ENCODE measurements at regions of chr6 and their contacts with region 1.

Region 1: GRCh38 chr6:32622545-32623401 is 14.4 kb upstream of the HLA-DQA1 start:
- DNase-seq: peak in 8 of 9 donors; percentile 26 to 90 (median 74)
- ATAC-seq: peak; percentile 87
- H3K4me3 ChIP-seq: peak overlapping the region; percentile 5
- H3K4me3 Mint-ChIP-seq: peak overlapping the region in 9 of 10 donors; percentile 14 to 86 (median 72)
- H3K27ac ChIP-seq: peak overlapping the region; percentile 67
- H3K27ac Mint-ChIP-seq: peak overlapping the region; percentile 62 to 97 (median 88)
- H3K4me1 ChIP-seq: peaks cover 29 to 31% of the 10 kb centered on the region in 2 donors
- H3K4me1 Mint-ChIP-seq: peaks cover 22 to 60% (median 46%) of the 10 kb centered on the region in 7 donors
- H3K27me3 ChIP-seq: no peaks in the 10 kb centered on the region
- H3K27me3 Mint-ChIP-seq: no peaks in the 10 kb centered on the region

Region 2: GRCh38 chr6:32413427-32414047 is 209.2 kb before region 1 on chr6:
- CTCF ChIA-PET with region 1: no interaction called
- POLR2A ChIA-PET with region 1: no interaction called
- intact Hi-C with region 1: loop called in 1 of 2 experiments (anchors 2 kb)
- DNase-seq: peak; percentile 54 to 85 (median 79)
- ATAC-seq: peak; percentile 96
- H3K4me3 ChIP-seq: no peak overlapping the region
- H3K4me3 Mint-ChIP-seq: no peak overlapping the region
- H3K27ac ChIP-seq: no peak overlapping the region
- H3K27ac Mint-ChIP-seq: no peak overlapping the region
- H3K4me1 ChIP-seq: no peaks in the 10 kb centered on the region
- H3K4me1 Mint-ChIP-seq: peaks cover 3 to 14% (median 8%) of the 10 kb centered on the region in 7 donors
- H3K27me3 ChIP-seq: peaks cover 0 to 3% of the 10 kb centered on the region in 2 donors
- H3K27me3 Mint-ChIP-seq: peaks cover 30 to 62% (median 45%) of the 10 kb centered on the region in 5 donors

Region 3: DNA sequence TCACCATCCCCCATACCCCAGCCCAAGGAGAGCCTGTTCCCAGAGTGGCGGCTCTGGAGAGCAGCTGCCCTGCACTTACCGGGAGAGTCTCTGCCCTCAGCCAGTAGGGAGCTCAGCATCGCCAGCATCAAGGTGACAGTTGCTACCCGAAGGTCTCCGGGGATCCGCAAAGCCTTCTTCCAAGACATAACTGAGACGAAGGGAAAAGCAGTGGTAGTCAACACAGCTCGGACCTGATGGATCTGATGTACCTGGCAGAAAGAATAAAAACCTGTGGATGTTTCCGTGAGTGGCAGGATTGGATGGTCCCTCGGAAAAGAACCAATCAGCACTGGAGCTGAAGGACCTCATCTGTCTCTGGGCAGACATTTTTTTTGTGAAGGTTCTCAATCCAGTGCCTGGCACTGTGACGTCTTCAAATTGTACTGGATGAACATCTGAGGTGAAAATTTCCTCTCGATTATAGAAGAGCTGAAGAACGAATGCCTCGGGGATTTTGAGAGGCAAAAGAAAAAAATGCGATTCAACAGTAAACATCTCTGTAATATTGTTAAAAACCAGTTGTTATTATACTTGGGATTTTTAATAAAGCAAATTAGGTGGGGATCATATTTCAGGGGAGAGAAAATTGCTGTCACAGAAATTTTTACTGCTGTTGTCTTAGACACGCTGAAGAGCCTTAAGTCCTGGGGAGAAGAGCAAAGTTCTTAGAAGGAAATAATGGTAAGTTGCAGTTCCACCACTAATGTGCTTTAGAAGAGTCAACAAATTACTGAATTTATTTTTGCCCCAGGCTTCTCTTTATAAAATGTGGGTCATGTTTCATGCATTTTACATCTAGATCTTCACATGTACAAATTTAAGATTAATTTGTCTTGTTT is 43.9 kb after region 1 on chr6 and contains the start of gene HLA-DQB1:
- CTCF ChIA-PET with region 1: no interaction called
- POLR2A ChIA-PET with region 1: no interaction called
- intact Hi-C with region 1: loop called (anchors 1 to 2 kb)
- DNase-seq: peak in 5 of 9 donors; percentile 49 to 67 (median 61)
- ATAC-seq: peak; percentile 90
- H3K4me3 ChIP-seq: peak within 1 kb of the TSS; percentile 63
- H3K4me3 Mint-ChIP-seq: peak within 1 kb of the TSS; percentile 45 to 88 (median 75)
- H3K27ac ChIP-seq: peak within 1 kb of the TSS; percentile 45
- H3K27ac Mint-ChIP-seq: peak within 1 kb of the TSS in 6 of 9 donors; percentile 47 to 86 (median 68)
- H3K4me1 ChIP-seq: peaks cover 11% of the 10 kb centered on the region in 2 donors
- H3K4me1 Mint-ChIP-seq: peaks cover 21 to 48% (median 40%) of the 10 kb centered on the region in 7 donors
- H3K27me3 ChIP-seq: no peaks in the 10 kb centered on the region
- H3K27me3 Mint-ChIP-seq: peaks cover 12 to 62% (median 24%) of the 10 kb centered on the region in 5 donors
- total RNA-seq, gene HLA-DQB1: 5.3 to 38.9 (median 9.4) TPM

Region 4: DNA sequence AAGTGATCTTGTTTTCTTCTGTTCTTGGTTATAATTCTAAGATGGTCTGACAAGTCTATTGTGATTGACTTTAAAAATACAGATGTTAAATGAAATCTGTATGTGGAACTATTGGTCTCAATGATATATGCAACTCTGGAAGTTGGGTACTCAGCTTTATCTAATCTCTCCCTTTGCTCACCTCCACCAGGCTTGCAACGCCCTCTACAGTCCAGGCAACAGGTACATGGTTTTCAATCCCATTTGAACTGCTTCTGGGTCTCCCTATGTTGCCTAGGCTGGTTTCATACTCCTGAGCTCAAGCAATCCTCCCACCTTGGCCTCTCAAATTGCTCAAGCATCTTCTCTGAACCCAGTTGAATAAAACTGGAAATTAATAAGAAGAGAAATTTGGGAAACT is 69.2 kb after region 1 on chr6:
- CTCF ChIA-PET with region 1: interaction called, 6 read pairs
- POLR2A ChIA-PET with region 1: no interaction called
- intact Hi-C with region 1: loop called in 1 of 2 experiments (anchors 2 kb)
- DNase-seq: peak in 8 of 9 donors; percentile 13 to 62 (median 46)
- ATAC-seq: peak; percentile 76
- H3K4me3 ChIP-seq: no peak overlapping the region
- H3K4me3 Mint-ChIP-seq: no peak overlapping the region
- H3K27ac ChIP-seq: no peak overlapping the region
- H3K27ac Mint-ChIP-seq: no peak overlapping the region
- H3K4me1 ChIP-seq: peaks cover 0 to 1% of the 10 kb centered on the region in 2 donors
- H3K4me1 Mint-ChIP-seq: peaks cover 4 to 16% (median 7%) of the 10 kb centered on the region in 7 donors
- H3K27me3 ChIP-seq: no peaks in the 10 kb centered on the region
- H3K27me3 Mint-ChIP-seq: peaks cover 3 to 58% (median 23%) of the 10 kb centered on the region in 5 donors

Region 5: DNA sequence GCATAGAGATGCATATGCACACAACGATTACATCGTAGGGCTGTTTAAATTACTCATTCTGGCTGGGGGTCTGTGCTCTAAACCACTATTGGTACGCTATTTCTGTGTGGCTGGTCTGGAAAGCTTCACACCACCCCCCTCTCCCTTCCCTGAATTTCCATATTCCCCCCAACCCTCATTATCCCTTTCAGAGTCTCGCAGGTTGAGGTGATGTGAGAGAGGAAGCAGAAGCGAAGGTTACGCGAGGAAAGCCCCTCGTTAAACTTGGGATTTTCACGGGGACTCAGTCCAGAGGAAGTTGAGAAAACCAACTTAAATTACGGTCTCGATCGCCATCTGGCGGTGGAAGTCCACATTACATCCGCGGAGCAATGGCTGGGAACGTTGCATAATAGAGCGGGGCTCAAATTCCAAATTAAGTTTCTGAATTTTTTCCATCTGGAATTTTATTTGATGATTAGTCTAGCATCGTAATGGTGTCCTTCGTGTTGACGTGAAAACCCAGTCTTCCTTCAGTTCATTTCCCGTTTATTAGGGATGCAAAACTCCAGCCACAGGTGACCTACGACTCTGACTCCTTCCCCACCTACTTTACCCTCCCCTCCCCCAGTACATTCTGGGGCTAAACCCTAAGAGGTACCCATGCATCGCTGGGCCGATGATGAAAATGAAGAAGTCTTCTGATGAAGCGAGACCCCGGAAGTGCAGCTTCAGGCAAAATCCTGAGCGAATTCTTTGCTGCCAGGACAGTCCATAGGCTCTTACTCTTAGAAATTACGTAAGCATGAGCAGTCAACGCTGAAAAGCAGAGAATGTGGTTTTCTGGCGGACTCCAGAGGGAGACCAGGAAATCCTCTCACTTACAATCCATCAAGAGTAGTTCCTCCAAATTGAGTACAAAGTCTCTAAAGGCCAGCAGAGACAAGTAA is 174.3 kb after region 1 on chr6:
- CTCF ChIA-PET with region 1: interaction called, 5 read pairs
- POLR2A ChIA-PET with region 1: no interaction called
- intact Hi-C with region 1: loop called in 1 of 2 experiments (anchors 2 kb)
- DNase-seq: peak; percentile 38 to 79 (median 62)
- ATAC-seq: peak; percentile 80
- H3K4me3 ChIP-seq: no peak overlapping the region
- H3K4me3 Mint-ChIP-seq: peak overlapping the region in 9 of 10 donors; percentile 35 to 80 (median 68)
- H3K27ac ChIP-seq: no peak overlapping the region
- H3K27ac Mint-ChIP-seq: peak overlapping the region in 1 of 9 donors; percentile 23
- H3K4me1 ChIP-seq: peaks cover 5 to 16% of the 10 kb centered on the region in 2 donors
- H3K4me1 Mint-ChIP-seq: peaks cover 15 to 35% (median 27%) of the 10 kb centered on the region in 7 donors
- H3K27me3 ChIP-seq: peaks cover 0 to 5% of the 10 kb centered on the region in 2 donors
- H3K27me3 Mint-ChIP-seq: peaks cover 0 to 70% (median 29%) of the 10 kb centered on the region in 5 donors

Measured in naive thymus-derived CD4-positive, alpha-beta T cell (primary cell).